ENCODE measurements at regions of chr7 and their contacts with region 1.

Region 1: GRCh38 chr7:98168181-98168905 is 42.9 kb upstream of the BHLHA15 start:
- DNase-seq: no peak
- H3K4me3 ChIP-seq: no peak overlapping the region
- H3K27ac ChIP-seq: no peak overlapping the region
- H3K4me1 ChIP-seq: peaks cover 16% of the 10 kb centered on the region
- H3K27me3 ChIP-seq: no peaks in the 10 kb centered on the region
- CTCF ChIP-seq: peak; percentile 61 to 82 (median 66)
- POLR2A ChIP-seq: no peak

Region 2: DNA sequence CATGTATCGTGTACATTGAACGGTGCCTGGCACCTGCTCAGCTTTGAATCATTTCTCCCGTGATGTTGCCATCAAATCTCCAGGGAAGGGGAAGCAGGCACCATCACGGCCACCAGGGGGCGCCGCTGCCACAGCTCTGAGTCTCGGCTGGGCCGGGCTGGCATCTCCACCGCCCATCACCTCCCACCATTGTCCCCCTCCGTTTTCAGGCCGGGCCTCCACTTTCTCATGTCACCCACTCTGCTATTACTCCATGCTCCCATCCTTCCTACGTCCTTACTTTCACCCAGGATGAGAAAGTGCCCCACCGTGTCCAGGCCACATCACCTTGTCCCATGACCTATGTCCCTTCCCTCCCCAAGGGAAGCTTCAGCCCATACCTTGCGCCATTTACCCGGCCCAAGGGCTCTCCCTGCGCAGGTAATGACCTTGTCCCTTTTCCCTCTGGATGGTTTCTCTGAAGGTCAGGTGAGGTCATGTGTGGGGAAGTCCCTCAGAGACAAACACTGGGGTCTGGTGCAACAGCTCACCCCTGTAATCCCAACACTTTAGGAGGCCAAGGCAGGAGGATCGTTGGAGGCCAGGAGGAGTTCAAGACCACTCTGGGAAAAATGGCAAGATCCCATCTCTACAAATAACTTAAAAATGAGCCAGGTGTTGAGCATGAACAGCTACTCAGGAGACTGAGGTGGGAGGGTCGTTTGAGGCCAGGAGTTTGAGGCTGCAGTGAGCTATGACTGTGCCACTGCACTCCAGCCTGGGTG is 146.6 kb before region 1 on chr7:
- intact Hi-C with region 1: loop called (anchors 5 kb)
- DNase-seq: no peak
- H3K4me3 ChIP-seq: no peak overlapping the region
- H3K27ac ChIP-seq: no peak overlapping the region
- H3K4me1 ChIP-seq: no peaks in the 10 kb centered on the region
- H3K27me3 ChIP-seq: no peaks in the 10 kb centered on the region
- CTCF ChIP-seq: peak; percentile 64 to 87 (median 82)
- POLR2A ChIP-seq: no peak

Region 3: GRCh38 chr7:98079891-98080648 is 88.3 kb before region 1 on chr7:
- intact Hi-C with region 1: no loop called
- DNase-seq: peak; percentile 19 to 54
- H3K4me3 ChIP-seq: no peak overlapping the region
- H3K27ac ChIP-seq: no peak overlapping the region
- H3K4me1 ChIP-seq: no peaks in the 10 kb centered on the region
- H3K27me3 ChIP-seq: no peaks in the 10 kb centered on the region
- CTCF ChIP-seq: no peak
- POLR2A ChIP-seq: no peak

Region 4: GRCh38 chr7:98105942-98106544 is 62.3 kb before region 1 on chr7:
- intact Hi-C with region 1: loop called (anchors 2 kb)
- DNase-seq: no peak
- H3K4me3 ChIP-seq: peak overlapping the region in 1 of 2 donors; percentile 89
- H3K27ac ChIP-seq: no peak overlapping the region
- H3K4me1 ChIP-seq: peaks cover 32% of the 10 kb centered on the region
- H3K27me3 ChIP-seq: no peaks in the 10 kb centered on the region
- CTCF ChIP-seq: no peak
- POLR2A ChIP-seq: no peak

Region 5: GRCh38 chr7:98142658-98143057 is 25.7 kb before region 1 on chr7:
- intact Hi-C with region 1: loop called (anchors 1 kb)
- DNase-seq: no peak
- H3K4me3 ChIP-seq: no peak overlapping the region
- H3K27ac ChIP-seq: no peak overlapping the region
- H3K4me1 ChIP-seq: no peaks in the 10 kb centered on the region
- H3K27me3 ChIP-seq: no peaks in the 10 kb centered on the region
- CTCF ChIP-seq: no peak
- POLR2A ChIP-seq: no peak